Activated T-helper 1 cell treated with anti-CD3 and anti-CD28 coated beads, Interleukin-12 subunit alpha, Interleukin-12 subunit beta, Interleukin-2, Interleukin-4 antibody, amounts not matched to agents 30 ng/mL and 10 ng/mL and 1 ng/mL, durations not matched to agents 14 hours and 24 hours and 36 hours (primary cell): ENCODE measurements at regions of chr20 and their contacts with region 1.

Region 1: DNA sequence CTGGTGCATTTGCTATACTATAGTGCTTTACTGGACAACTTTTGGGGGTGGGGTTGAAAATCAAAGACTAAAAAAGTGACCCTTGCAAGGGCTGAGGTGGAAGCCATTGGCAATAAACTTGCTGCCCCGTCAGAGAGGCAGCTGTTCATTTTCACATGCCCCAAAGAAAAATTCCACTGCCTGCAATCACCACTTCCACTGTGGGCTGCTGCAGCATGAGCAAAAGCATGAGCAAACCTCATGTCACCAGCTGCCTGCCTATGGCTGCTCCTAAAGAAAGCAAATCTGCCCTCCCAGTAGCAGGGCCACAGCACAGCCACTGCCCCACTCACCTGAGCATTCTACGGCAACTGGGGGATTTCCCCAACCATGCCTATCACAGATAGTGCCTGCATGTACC is 290.0 kb downstream of the PAX1 start:
- DNase-seq: no peak
- H3K4me3 Mint-ChIP-seq: no peak overlapping the region
- H3K27ac Mint-ChIP-seq: no peak overlapping the region
- H3K4me1 Mint-ChIP-seq: no peaks in the 10 kb centered on the region
- H3K27me3 Mint-ChIP-seq: no peaks in the 10 kb centered on the region

Region 2: GRCh38 chr20:21968486-21968885 is 27.0 kb before region 1 on chr20:
- intact Hi-C with region 1: loop called (anchors 5 kb)
- DNase-seq: no peak
- H3K4me3 Mint-ChIP-seq: no peak overlapping the region
- H3K27ac Mint-ChIP-seq: no peak overlapping the region
- H3K4me1 Mint-ChIP-seq: no peaks in the 10 kb centered on the region
- H3K27me3 Mint-ChIP-seq: no peaks in the 10 kb centered on the region

Region 3: GRCh38 chr20:22027423-22027822 is 32.0 kb after region 1 on chr20:
- intact Hi-C with region 1: no loop called
- DNase-seq: no peak
- H3K4me3 Mint-ChIP-seq: no peak overlapping the region
- H3K27ac Mint-ChIP-seq: no peak overlapping the region
- H3K4me1 Mint-ChIP-seq: no peaks in the 10 kb centered on the region
- H3K27me3 Mint-ChIP-seq: no peaks in the 10 kb centered on the region